ENCODE measurements at regions of chr7 and their contacts with region 1.

Region 1: GRCh38 chr7:93055543-93056107 is 62.2 kb downstream of the SAMD9 start:
- DNase-seq: no peak
- ATAC-seq: peak; percentile 62
- H3K4me3 ChIP-seq: no peak overlapping the region
- H3K4me1 ChIP-seq: peaks cover 6% of the 10 kb centered on the region
- CTCF ChIP-seq: peak; percentile 41

Region 2: DNA sequence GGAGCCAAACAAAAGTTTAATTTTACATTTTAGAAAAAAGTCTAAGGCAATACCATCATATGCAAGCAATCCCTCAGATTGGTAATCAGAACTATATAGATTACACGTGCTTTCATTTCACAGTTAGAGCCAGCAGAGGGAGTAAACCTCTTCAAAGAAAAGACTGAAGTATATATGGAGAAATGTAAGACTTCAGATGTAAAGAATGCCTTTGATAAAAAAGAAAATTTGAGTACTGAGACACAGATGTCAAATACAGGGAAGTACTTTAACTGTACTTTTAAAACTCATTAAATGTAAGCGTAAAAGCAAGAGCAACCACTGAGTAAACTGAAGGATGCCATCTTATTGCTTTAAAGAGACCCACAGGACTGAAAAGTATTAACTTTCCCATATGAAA is 364.0 kb before region 1 on chr7:
- intact Hi-C with region 1: loop called in 1 of 2 experiments (anchors 5 kb)
- DNase-seq: peak in 1 of 3 donors; percentile 72
- ATAC-seq: peak; percentile 64
- H3K4me3 ChIP-seq: no peak overlapping the region
- H3K4me1 ChIP-seq: peaks cover 6% of the 10 kb centered on the region
- CTCF ChIP-seq: peak; percentile 55

Region 3: DNA sequence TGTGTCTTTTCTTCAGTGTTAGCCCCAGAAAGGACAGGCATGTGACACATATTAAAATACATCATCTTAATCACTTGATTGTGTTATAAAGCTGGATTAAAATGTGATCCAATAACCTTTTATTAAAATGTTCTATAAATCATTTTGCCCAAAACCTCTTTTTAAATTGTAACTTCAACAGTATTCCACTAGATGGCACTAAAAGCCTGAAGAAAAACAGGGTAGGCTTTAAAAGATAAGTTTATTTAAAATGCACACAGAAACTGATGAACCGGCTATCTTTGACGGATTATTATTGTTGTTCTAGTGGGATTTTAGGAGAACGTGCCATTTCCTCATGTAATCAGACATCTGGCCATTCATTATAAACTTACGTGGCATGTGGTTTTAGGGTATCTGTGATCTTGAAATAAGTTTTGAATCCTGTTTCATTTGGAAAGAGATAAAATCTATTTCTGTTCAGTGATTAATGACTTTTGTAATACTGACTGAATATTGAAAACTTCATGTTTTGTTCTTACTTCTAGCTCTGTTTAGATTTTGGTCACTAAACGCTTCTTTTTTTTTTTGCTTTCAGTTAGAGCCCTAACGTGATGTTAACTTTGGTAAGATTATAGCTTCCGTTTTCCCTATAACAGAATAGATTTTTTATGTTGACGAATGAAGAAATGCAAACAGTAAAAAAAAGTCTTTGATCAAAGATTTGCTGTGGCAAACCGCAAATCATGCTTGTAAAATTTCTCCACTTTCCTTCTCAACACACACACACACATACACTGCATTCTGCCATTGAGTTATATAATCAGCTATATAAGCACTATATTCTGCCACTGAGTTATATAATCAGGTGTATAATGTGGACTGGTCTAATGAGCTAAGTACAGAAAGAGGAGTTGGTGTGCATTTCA is 190.2 kb after region 1 on chr7:
- intact Hi-C with region 1: no loop called
- DNase-seq: peak in 1 of 3 donors; percentile 28
- ATAC-seq: peak; percentile 60
- H3K4me3 ChIP-seq: no peak overlapping the region
- H3K4me1 ChIP-seq: peaks cover 2% of the 10 kb centered on the region
- CTCF ChIP-seq: no peak